ENCODE measurements at regions of chr12 and their contacts with region 1.

Region 1: GRCh38 chr12:89901906-89902642 is 193.4 kb upstream of the ATP2B1 start:
- DNase-seq: no peak
- ATAC-seq: peak; percentile 53; the same call in 2 of the 3 replicates
- H3K4me3 ChIP-seq: no peak overlapping the region
- H3K27ac ChIP-seq: no peak overlapping the region
- H3K4me1 ChIP-seq: no peaks in the 10 kb centered on the region
- H3K27me3 ChIP-seq: no peaks in the 10 kb centered on the region
- CTCF ChIP-seq: no peak
- EP300 ChIP-seq: no peak
- POLR2A ChIP-seq: no peak
- RAD21 ChIP-seq: no peak

Region 2: DNA sequence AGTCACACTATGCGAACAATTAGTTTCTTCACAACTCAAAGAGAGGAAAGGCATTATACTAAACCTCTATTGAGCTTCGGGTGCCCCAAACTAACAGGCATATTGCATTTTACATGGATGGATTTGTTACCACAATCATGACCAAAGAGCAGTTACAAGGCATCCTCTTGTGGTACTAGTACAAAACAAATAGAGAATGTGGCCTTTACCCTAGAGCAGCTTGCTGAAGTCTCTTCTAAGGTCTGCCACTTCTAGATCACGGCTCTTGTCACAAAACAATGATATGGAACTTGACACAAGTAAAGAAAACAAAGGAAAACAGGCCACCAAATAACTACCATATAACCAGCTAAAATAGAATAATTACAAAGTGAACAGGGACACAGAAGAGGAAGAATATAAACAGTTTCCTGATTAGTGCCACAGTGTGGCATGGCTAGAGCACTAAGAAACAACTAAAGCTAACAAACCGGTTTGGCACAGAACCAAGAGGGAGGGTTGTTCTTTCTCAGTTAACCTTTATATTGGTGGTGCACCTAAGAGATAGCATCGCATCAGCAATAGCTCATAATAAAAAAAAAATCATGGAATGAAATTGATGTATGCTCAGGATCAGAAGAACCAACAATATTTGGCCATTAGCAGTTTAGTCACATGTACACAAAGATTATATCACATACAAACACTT is 16.3 kb after region 1 on chr12:
- CTCF ChIA-PET with region 1: interaction called, 8 read pairs
- POLR2A ChIA-PET with region 1: no interaction called
- RAD21 ChIA-PET with region 1: no interaction called
- SMC1A ChIA-PET with region 1: interaction called, 10 read pairs
- in situ Hi-C with region 1: no loop called
- intact Hi-C with region 1: no loop called
- DNase-seq: no peak
- ATAC-seq: no peak
- H3K4me3 ChIP-seq: no peak overlapping the region
- H3K27ac ChIP-seq: no peak overlapping the region
- H3K4me1 ChIP-seq: no peaks in the 10 kb centered on the region
- H3K27me3 ChIP-seq: no peaks in the 10 kb centered on the region
- CTCF ChIP-seq: no peak
- EP300 ChIP-seq: no peak
- POLR2A ChIP-seq: no peak
- RAD21 ChIP-seq: no peak